ENCODE measurements at regions of chr1 and their contacts with region 1.

Region 1: GRCh38 chr1:16644193-16644481 is 22.6 kb downstream of the RNU1-3 start:
- ATAC-seq: peak in 2 of 8 experiments; percentile 41 to 65
- H3K4me3 ChIP-seq: peak overlapping the region; percentile 79 to 96 (median 90)
- H3K27ac ChIP-seq: peak overlapping the region; percentile 37 to 86
- H3K4me1 ChIP-seq: peaks cover 18% of the 10 kb centered on the region in 2 donors

Region 2: GRCh38 chr1:16521288-16521583 is 122.9 kb before region 1 on chr1:
- in situ Hi-C with region 1: loop called in 1 of 9 experiments (anchors 25 kb)
- ATAC-seq: no peak
- H3K4me3 ChIP-seq: no peak overlapping the region
- H3K27ac ChIP-seq: no peak overlapping the region
- H3K4me1 ChIP-seq: peaks cover 0 to 4% of the 10 kb centered on the region in 2 donors

Region 3: DNA sequence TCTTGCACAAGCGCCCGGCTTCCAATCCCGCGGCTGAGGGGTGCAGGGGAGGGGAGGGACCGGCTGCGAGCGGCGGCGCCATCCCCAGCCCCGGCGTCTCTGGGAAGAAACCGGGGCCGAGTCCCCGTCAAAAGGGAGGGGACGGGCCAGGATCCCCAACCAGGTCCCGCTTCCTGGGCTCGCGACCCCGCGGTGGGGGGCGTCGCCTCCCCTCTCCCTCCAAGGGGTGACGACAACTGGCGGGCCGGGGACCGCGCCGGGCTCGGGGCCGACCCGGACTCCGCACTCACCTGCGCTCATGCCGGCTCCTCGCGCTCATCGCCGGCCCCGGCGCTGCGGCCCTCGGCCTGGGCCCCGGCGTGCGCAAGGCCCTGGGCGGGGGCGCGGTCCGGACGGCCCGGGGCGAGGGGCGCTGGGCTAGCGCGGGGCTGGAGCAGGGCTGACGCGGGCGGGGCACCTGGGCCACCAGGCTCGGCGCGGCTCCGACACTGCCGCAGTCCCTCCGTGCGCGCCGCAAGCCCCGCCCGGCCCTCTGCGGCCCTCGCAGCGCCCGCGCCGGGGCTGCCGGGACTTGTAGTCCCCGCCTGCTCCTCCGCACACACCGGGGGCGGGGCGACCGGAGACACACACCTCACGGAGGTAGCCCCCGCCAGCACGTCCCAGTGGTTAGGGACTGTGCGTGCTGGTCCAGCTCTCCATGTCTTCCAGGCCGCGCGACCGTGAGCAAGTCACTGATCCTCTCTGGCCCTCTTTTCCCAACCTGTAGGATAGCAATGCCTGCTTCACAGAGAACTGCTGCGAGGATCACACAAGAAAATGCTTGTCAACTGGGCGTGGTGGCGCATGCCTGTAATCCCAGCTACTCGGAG is 367.5 kb after region 1 on chr1 and contains the start of gene ATP13A2:
- in situ Hi-C with region 1: loop called in 1 of 9 experiments (anchors 25 kb)
- ATAC-seq: peak; percentile 81 to 96 (median 96)
- H3K4me3 ChIP-seq: peak within 1 kb of the TSS; percentile 68 to 96 (median 83)
- H3K27ac ChIP-seq: no peak within 1 kb of the TSS
- H3K4me1 ChIP-seq: peaks cover 12 to 13% of the 10 kb centered on the region in 2 donors
- total RNA-seq, gene ATP13A2: 32.2 to 80.0 (median 55.8) TPM

Region 4: GRCh38 chr1:17045634-17046333 is 401.6 kb after region 1 on chr1:
- in situ Hi-C with region 1: loop called in 1 of 9 experiments (anchors 25 kb)
- ATAC-seq: peak; percentile 48 to 99 (median 60)
- H3K4me3 ChIP-seq: no peak overlapping the region
- H3K27ac ChIP-seq: no peak overlapping the region
- H3K4me1 ChIP-seq: peaks cover 3 to 5% of the 10 kb centered on the region in 2 donors